BJ (cell line): ENCODE measurements at regions of chr20 and their contacts with region 1.

Region 1: GRCh38 chr20:59835448-59836395 is 97.7 kb downstream of the SYCP2 start:
- DNase-seq: peak; percentile 5
- H3K4me3 ChIP-seq: no peak overlapping the region; the same call in 1 of the 2 replicates
- H3K27me3 ChIP-seq: peaks cover 2% of the 10 kb centered on the region
- CTCF ChIP-seq: no peak

Region 2: DNA sequence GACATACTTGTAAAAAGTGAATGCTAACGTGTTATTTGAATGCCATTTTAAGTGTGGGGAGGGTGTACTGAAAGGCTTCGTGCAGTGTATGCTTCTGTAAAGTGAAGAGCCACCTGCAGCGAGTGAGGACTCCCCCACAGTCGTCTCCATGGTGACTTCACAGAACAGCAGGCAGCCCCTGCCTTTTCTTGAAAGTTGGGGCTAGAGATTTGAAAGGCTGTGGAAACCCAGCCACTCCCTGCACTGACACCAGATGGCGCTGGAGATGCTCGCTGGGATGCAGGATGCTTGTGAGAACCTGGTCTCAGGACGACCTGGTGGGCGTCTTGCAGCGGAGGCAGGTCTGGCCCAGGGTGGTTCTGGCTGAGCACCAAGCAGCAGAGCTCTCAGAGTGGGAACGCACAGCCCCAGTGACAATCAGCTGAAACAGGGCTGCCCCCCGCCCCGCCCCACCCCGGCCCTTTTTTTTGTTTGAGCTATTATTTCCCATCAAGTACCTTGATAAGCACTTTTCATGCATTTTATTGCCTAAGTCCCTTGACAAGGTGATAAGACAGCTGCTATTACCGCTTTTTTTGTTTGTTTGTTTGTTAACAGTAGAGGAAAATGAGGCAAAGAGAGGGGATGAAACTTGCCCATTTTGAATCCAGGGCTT is 52.6 kb before region 1 on chr20:
- CTCF ChIA-PET with region 1: interaction called, 12 read pairs
- POLR2A ChIA-PET with region 1: no interaction called
- DNase-seq: no peak
- H3K4me3 ChIP-seq: no peak overlapping the region
- H3K27me3 ChIP-seq: peaks cover 2% of the 10 kb centered on the region; the same call in 1 of the 2 replicates
- CTCF ChIP-seq: peak; percentile 97

Region 3: DNA sequence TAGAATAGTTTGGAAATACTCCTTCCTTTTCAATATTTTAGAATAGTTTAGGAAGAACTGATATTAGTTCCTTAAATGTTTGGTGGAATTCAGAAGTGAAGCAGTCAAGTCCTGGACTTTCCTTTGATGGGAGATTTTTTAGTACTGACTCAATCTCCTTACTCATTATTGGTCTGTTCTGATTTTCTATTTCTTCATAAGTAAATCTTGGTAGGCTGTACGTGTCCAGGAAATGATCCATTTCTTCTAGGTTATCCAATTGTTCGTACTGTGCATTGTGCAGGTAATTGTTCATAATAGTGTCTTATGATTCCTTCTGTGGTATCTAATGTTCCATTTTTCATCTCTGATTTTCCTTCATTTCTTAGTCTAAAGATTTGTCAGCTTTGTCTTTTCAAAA is 41.2 kb before region 1 on chr20:
- CTCF ChIA-PET with region 1: no interaction called
- POLR2A ChIA-PET with region 1: no interaction called
- DNase-seq: no peak
- H3K4me3 ChIP-seq: no peak overlapping the region
- H3K27me3 ChIP-seq: no peaks in the 10 kb centered on the region
- CTCF ChIP-seq: no peak

Region 4: DNA sequence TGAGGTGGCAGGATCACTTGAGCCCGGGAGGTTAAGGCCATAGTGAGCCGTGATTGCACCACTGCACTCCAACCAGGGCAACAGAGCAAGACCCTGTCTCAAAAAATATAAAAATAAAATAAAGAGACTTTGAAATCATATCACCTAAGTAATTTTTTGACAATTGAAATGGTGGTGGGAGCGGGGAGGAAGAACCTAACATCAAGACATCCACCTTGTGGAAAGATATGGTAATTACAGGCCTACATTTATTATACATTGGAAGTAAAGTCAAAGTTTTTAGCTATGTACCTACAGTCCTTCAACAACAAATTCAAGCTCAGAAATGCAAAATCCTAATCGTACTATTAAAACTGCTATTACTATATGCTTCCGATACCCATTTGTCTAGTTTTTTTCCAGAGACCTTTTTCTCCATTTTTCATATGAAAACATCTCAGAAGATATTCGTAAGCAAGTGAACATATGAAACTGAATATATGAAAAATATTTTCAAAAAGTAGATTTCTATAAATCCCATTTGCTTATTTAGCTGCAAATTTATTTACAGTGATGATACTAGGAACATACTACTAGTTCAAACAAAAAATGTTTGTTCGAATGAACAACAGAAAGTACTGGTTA is 14.4 kb after region 1 on chr20:
- CTCF ChIA-PET with region 1: interaction called, 79 read pairs
- POLR2A ChIA-PET with region 1: no interaction called
- DNase-seq: no peak
- H3K4me3 ChIP-seq: no peak overlapping the region
- H3K27me3 ChIP-seq: no peaks in the 10 kb centered on the region
- CTCF ChIP-seq: peak; percentile 58